Activated CD8-positive, alpha-beta memory T cell treated with anti-CD3 and anti-CD28 coated beads, Interleukin-2, amount 10 ng/mL, durations not matched to agents 7 days and 5 days (primary cell): ENCODE measurements at regions of chr19 and their contacts with region 1.

Region 1: GRCh38 chr19:11587302-11587974 is 9.8 kb upstream of the ZNF627 start:
- DNase-seq: peak; percentile 88
- ATAC-seq: peak; percentile 94
- H3K4me3 Mint-ChIP-seq: no peak overlapping the region
- H3K27ac Mint-ChIP-seq: peak overlapping the region; percentile 49
- H3K4me1 Mint-ChIP-seq: peaks cover 23% of the 10 kb centered on the region
- H3K27me3 Mint-ChIP-seq: no peaks in the 10 kb centered on the region

Region 2: GRCh38 chr19:11558881-11559828 is 28.3 kb before region 1 on chr19 and contains the start of gene ELOF1:
- CTCF ChIA-PET with region 1: interaction called, 233 read pairs
- DNase-seq: peak; percentile 99
- ATAC-seq: peak; percentile 96
- H3K4me3 Mint-ChIP-seq: peak within 1 kb of the TSS; percentile 85
- H3K27ac Mint-ChIP-seq: peak within 1 kb of the TSS; percentile 92
- H3K4me1 Mint-ChIP-seq: peaks cover 58% of the 10 kb centered on the region
- H3K27me3 Mint-ChIP-seq: no peaks in the 10 kb centered on the region
- total RNA-seq, gene ELOF1: 55.1 to 67.2 TPM